OCI-LY7 (cell line): ENCODE measurements at regions of chr10 and their contacts with region 1.

Region 1: GRCh38 chr10:112570585-112570984 is 123.6 kb downstream of the VTI1A start:
- DNase-seq: no peak
- H3K4me3 ChIP-seq: no peak overlapping the region
- H3K27ac ChIP-seq: no peak overlapping the region
- H3K4me1 ChIP-seq: no peaks in the 10 kb centered on the region
- CTCF ChIP-seq: no peak

Region 2: GRCh38 chr10:113385021-113385999 is 814.7 kb after region 1 on chr10:
- CTCF ChIA-PET with region 1: no interaction called
- POLR2A ChIA-PET with region 1: no interaction called
- intact Hi-C with region 1: loop called (anchors 10 kb)
- DNase-seq: peak; percentile 56
- H3K4me3 ChIP-seq: no peak overlapping the region
- H3K27ac ChIP-seq: no peak overlapping the region
- H3K4me1 ChIP-seq: peaks cover 6% of the 10 kb centered on the region
- CTCF ChIP-seq: peak; percentile 77